ENCODE measurements at regions of chrX and their contacts with region 1.

Region 1: DNA sequence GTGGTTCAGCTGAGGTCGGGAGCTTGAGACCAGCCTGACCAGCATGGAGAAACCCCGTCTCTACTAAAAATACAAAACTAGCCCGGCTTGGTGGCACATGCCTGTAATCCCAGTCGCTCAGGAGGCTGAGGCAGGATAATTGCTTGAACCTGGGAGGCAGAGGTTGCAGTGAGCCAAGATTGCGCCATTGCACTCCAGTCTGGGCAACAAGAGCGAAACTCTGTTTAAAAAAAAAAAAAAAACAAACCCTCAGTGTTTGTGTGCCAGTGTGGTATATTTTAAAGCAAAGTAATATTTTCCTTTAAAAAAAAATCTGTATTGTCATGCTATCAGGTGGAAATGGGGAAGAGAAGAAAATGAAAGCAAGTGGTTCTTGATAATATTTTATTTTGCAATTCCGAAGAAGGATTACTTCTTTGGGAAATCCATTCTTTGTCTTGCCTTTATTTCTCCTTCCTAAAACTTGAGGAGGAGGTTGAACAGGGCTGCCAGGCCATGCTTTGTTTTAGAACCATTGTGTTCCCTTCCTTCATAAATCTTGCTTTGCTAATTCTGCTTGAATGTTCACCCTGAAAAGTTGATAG is 14.4 kb downstream of the ALG13 start:
- DNase-seq: no peak
- H3K4me3 ChIP-seq: no peak overlapping the region
- H3K27ac ChIP-seq: no peak overlapping the region
- H3K4me1 ChIP-seq: no peaks in the 10 kb centered on the region
- H3K27me3 ChIP-seq: no peaks in the 10 kb centered on the region
- CTCF ChIP-seq: no peak

Region 2: DNA sequence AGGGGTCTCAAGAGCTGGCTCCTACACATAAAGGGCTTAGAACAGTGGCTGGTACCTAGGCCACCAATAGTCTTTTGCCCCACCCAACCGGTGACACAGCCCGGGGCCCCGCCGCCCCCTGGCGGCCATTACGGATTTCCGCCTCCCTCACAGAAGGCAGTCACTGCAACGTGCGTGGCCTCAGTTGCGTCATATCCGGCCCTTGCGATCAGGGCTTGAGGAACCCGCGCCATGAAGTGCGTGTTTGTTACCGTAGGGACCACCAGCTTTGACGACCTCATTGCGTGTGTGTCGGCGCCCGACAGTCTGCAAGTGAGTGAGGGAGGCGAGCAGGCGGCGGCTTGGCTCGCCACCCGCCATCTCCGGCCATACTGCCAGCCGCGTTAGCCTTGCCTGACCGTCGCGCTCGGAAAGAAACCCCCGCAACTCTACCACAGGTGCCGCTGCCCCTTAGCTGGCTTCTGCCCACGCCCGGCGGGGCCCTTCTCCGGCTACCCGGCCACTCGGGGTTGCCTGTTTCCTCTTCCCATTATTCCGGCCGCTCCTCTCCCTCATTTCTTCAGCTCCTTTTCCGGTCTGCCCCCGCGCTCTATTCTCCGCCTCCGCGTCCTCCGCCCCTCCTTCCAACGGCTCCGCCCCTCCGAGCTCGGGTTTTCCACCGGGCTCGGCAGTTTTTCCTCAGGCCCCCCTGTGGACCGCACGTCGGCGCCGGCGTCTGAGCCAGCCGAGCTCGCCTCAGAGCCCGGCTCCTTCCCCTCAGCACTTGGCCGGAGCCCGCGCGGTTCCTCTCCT is 14.2 kb before region 1 on chrX and contains the start of gene ALG13:
- CTCF ChIA-PET with region 1: interaction called, 11 read pairs
- POLR2A ChIA-PET with region 1: no interaction called
- intact Hi-C with region 1: no loop called
- DNase-seq: peak; percentile 92
- H3K4me3 ChIP-seq: peak within 1 kb of the TSS; percentile 61
- H3K27ac ChIP-seq: peak within 1 kb of the TSS; percentile 98
- H3K4me1 ChIP-seq: no peaks in the 10 kb centered on the region
- H3K27me3 ChIP-seq: peaks cover 14% of the 10 kb centered on the region
- CTCF ChIP-seq: peak; percentile 71
- total RNA-seq, gene ALG13: 31.9 and 35.9 TPM in 2 replicates

Measured in A673 (cell line).